Heart left ventricle (tissue), 16 donors: ENCODE measurements at regions of chr5 and their contacts with region 1.

Region 1: DNA sequence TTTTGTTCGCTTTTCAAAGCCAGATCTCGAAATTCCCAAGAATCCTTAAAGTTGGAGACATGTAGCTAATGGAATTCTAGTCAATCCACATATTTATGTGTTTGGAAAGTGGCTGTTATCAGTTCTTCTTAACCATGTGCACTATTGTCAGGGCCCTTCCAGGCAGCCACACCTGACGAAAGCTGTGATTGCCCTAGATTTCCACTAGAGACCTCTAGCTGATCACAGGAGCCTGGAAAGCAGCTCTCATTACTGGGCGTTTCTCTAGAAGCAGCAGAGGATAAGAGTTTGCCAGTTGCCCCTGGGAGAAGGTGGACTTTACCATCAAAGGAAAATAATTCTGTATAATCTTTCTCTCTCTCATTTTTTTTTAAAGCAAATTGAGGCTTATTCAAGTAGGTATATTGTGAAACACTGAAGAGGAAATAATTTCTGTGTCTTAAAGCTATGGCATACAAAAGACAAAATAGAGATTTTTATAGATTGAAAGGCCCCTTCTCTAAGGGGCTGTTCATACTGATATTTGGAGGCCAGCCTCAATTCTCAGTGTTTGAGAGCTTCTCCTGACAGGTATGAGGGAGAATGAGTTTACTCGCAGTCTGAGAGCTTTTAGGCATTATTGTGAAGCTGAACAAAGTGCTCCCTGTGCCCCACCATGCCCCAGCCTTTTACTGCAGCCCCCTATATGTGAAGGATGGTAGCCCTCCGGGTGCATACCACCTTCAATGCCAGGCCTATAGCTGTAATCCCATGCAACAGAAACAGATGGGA is 405.4 kb upstream of the ACTBL2 start:
- DNase-seq: peak in 4 of 5 donors; percentile 47 to 64 (median 60)
- ATAC-seq: peak; percentile 76 to 96 (median 93)
- H3K4me3 ChIP-seq: no peak overlapping the region
- H3K27ac ChIP-seq: peak overlapping the region in 2 of 12 donors; percentile 1 to 32
- H3K4me1 ChIP-seq: peaks cover 0 to 19% (median 6%) of the 10 kb centered on the region in 12 donors
- H3K27me3 ChIP-seq: no peaks in the 10 kb centered on the region
- CTCF ChIP-seq: peak; percentile 39 to 82 (median 66)
- POLR2A ChIP-seq: no peak

Region 2: GRCh38 chr5:57650360-57651069 is 237.5 kb before region 1 on chr5:
- intact Hi-C with region 1: loop called in 2 of 10 experiments (anchors 10 kb)
- DNase-seq: no peak
- ATAC-seq: peak in 2 of 4 donors; percentile 50 to 61
- H3K4me3 ChIP-seq: no peak overlapping the region
- H3K27ac ChIP-seq: no peak overlapping the region
- H3K4me1 ChIP-seq: peaks cover 0 to 16% (median 0%) of the 10 kb centered on the region in 12 donors
- H3K27me3 ChIP-seq: no peaks in the 10 kb centered on the region
- CTCF ChIP-seq: peak; percentile 33 to 61 (median 51)
- POLR2A ChIP-seq: no peak

Region 3: DNA sequence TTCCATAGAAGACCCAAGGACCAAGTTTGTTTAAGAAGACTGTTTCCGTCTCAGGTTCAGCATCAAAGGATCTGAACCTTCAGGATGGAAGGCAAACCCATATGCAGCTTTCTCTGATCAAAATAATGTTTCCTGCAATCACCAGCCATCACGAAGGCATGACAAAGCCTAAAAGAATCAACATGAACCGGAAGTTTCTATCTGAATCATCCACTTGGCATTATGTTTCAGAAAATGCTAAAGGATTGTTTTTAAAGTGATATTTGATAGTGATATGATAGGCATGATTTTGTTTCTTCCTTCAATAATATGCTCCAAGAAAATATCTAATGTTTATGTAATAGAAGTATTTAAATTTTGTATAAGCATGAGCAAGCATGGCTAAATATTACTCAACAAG is 352.2 kb after region 1 on chr5:
- intact Hi-C with region 1: loop called in 2 of 10 experiments (anchors 5 to 10 kb)
- DNase-seq: no peak
- ATAC-seq: no peak
- H3K4me3 ChIP-seq: no peak overlapping the region
- H3K27ac ChIP-seq: peak overlapping the region in 8 of 12 donors; percentile 14 to 84 (median 63)
- H3K4me1 ChIP-seq: peaks cover 0 to 40% (median 7%) of the 10 kb centered on the region in 12 donors
- H3K27me3 ChIP-seq: no peaks in the 10 kb centered on the region
- CTCF ChIP-seq: no peak
- POLR2A ChIP-seq: no peak

Region 4: GRCh38 chr5:58466939-58467338 is 578.9 kb after region 1 on chr5:
- intact Hi-C with region 1: loop called in 1 of 10 experiments (anchors 5 kb)
- DNase-seq: no peak
- ATAC-seq: peak in 1 of 4 donors; percentile 34
- H3K4me3 ChIP-seq: no peak overlapping the region
- H3K27ac ChIP-seq: no peak overlapping the region
- H3K4me1 ChIP-seq: peaks cover 0 to 10% (median 2%) of the 10 kb centered on the region in 12 donors
- H3K27me3 ChIP-seq: no peaks in the 10 kb centered on the region
- CTCF ChIP-seq: no peak
- POLR2A ChIP-seq: no peak